Activated CD8-positive, alpha-beta T cell treated with anti-CD3 and anti-CD28 coated beads for 36 hours (primary cell): ENCODE measurements at regions of chr5 and their contacts with region 1.

Region 1: DNA sequence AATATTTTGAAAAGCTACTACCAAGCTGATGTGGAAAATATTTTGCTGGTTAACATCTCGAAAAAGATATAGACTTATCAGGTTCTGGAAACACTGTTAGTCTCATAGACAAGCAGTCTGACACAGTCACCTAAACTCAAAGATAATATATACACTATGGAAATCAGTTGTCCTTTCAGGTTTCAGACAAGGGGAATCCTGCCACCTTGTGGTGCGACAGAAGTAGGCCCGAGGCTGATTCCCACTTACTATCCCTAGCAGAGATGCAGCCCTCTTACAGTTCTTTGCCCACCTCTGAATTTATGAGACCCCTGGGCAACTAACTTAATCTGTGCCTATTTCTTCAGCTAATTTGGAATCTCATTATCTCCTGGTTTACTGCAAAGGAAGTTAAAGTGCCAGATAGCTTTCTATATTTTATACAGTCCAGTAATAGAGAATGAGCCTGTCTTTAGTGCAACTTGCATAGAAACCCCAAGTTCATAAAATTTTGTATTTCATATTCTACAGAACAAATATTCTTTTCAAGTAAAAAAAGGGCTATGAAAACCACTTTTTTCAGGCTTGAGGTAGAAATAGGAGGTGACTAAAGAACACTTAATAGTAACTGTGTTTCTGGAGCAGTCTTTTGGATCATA is 16.9 kb downstream of the RAD1 start:
- DNase-seq: peak; percentile 69
- ATAC-seq: peak; percentile 77
- H3K4me3 Mint-ChIP-seq: no peak overlapping the region
- H3K27ac Mint-ChIP-seq: no peak overlapping the region
- H3K4me1 Mint-ChIP-seq: no peaks in the 10 kb centered on the region
- H3K27me3 Mint-ChIP-seq: no peaks in the 10 kb centered on the region
- CTCF ChIP-seq: peak; percentile 80

Region 2: DNA sequence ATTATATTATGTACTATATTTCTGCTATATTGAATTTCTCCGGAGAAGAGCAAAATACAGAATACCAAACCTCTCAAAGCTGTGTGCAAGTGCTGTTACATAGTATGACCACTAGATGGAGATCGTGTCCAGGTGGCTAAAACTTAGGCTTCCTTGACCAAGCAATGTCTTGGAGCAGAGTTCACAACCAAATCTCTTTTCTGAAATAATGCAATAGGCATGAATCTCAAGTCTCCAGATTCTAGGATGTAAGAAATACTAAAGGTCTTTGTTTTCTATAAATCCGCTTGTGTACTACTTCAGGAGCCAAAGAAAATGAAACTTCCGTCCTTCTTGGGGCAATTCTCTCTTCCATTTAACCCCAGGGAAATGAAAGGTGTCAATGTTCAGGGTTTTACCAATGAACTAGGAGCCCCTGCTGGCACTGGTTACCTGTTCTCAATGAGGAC is 423.8 kb before region 1 on chr5:
- CTCF ChIA-PET with region 1: interaction called, 17 read pairs
- POLR2A ChIA-PET with region 1: no interaction called
- intact Hi-C with region 1: no loop called
- DNase-seq: no peak
- ATAC-seq: peak; percentile 79
- H3K4me3 Mint-ChIP-seq: no peak overlapping the region
- H3K27ac Mint-ChIP-seq: no peak overlapping the region
- H3K4me1 Mint-ChIP-seq: no peaks in the 10 kb centered on the region
- H3K27me3 Mint-ChIP-seq: peaks cover 7% of the 10 kb centered on the region
- CTCF ChIP-seq: peak; percentile 92

Region 3: DNA sequence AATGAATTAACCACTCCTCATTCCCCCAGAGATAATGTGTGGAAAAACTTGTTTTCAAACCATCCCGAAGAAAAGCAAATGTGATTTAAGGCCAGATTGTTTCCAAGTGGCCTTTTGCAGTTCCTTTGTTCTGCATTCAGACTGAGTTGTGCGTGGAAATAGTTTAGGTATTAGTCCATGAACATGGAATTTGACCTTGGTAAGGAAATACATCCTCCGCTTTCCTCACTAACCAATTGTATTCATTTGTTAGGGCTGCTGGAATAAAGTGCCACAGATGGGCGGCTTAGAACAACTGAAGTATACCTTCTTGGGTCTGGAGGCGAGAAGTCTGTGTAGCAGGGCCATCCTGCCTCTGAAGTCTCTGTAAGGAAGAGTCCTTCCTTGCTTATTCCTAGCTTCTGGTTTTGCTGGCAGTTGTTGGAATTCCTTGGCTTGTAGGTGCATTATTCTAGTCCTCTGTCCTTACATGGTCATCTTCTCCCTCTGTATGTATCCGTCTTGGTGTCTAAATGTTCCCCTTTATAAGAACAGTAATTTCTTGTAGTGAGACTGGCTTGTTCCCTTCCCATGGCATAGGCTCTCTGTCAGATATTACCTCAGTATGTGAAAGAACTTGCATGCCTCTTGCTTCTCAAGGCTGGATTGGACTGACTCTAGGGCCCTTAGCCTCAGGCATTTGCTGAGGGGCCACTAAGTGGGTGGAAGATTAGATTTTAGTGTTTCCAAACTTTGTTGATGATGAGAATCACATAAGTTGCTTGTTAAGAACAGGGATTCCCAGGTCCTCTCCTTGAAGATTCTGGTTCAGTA is 188.3 kb before region 1 on chr5:
- CTCF ChIA-PET with region 1: no interaction called
- POLR2A ChIA-PET with region 1: no interaction called
- intact Hi-C with region 1: no loop called
- DNase-seq: no peak
- ATAC-seq: no peak
- H3K4me3 Mint-ChIP-seq: no peak overlapping the region
- H3K27ac Mint-ChIP-seq: no peak overlapping the region
- H3K4me1 Mint-ChIP-seq: no peaks in the 10 kb centered on the region
- H3K27me3 Mint-ChIP-seq: peaks cover 3% of the 10 kb centered on the region
- CTCF ChIP-seq: no peak

Region 4: GRCh38 chr5:34886392-34887119 is 11.8 kb before region 1 on chr5:
- CTCF ChIA-PET with region 1: interaction called, 13 read pairs
- POLR2A ChIA-PET with region 1: no interaction called
- intact Hi-C with region 1: no loop called
- DNase-seq: no peak
- ATAC-seq: no peak
- H3K4me3 Mint-ChIP-seq: no peak overlapping the region
- H3K27ac Mint-ChIP-seq: no peak overlapping the region
- H3K4me1 Mint-ChIP-seq: no peaks in the 10 kb centered on the region
- H3K27me3 Mint-ChIP-seq: peaks cover 5% of the 10 kb centered on the region
- CTCF ChIP-seq: no peak